ENCODE measurements at regions of chr1 and their contacts with region 1.

Region 1: GRCh38 chr1:7902478-7903085 is 38.1 kb downstream of the TNFRSF9 start:
- DNase-seq: peak; percentile 53
- H3K4me3 ChIP-seq: no peak overlapping the region
- H3K27ac ChIP-seq: no peak overlapping the region
- H3K4me1 ChIP-seq: no peaks in the 10 kb centered on the region
- CTCF ChIP-seq: peak; percentile 76

Region 2: GRCh38 chr1:7478809-7479499 is 423.6 kb before region 1 on chr1:
- CTCF ChIA-PET with region 1: no interaction called
- POLR2A ChIA-PET with region 1: no interaction called
- intact Hi-C with region 1: no loop called
- DNase-seq: no peak
- H3K4me3 ChIP-seq: no peak overlapping the region
- H3K27ac ChIP-seq: no peak overlapping the region
- H3K4me1 ChIP-seq: no peaks in the 10 kb centered on the region
- CTCF ChIP-seq: no peak

Region 3: DNA sequence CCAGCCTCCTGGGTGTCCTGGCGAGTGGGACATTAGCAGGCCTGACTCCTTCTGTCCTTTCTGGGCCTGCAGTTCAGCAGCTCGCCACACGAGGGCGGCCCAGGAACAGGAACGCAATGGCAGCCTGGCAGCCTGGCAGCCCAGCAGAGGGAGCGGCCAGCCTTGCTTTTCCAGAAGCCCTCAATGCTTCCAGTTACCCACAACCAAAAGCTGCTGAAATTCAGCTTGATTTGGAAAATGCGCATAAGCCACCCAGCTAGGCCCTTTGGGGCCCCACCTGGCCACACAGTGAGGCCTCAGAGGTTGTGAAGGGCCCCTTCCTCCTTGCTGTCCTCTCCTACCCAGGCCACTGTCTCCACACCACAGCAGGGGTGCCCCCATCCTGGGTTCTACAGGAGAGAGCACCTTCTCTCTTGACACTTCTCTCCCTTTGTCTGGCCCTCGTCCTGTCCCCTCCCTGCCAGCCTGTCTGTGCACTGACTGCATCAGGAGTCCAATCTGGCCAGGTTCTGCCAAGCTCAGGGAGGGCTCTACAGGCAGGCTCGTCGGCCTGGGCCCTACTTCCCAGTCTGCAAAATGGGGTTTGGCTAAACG is 234.9 kb before region 1 on chr1:
- CTCF ChIA-PET with region 1: interaction called, 3 read pairs
- POLR2A ChIA-PET with region 1: no interaction called
- intact Hi-C with region 1: loop called (anchors 1 kb)
- DNase-seq: peak; percentile 64
- H3K4me3 ChIP-seq: no peak overlapping the region
- H3K27ac ChIP-seq: no peak overlapping the region
- H3K4me1 ChIP-seq: no peaks in the 10 kb centered on the region
- CTCF ChIP-seq: peak; percentile 91

Region 4: DNA sequence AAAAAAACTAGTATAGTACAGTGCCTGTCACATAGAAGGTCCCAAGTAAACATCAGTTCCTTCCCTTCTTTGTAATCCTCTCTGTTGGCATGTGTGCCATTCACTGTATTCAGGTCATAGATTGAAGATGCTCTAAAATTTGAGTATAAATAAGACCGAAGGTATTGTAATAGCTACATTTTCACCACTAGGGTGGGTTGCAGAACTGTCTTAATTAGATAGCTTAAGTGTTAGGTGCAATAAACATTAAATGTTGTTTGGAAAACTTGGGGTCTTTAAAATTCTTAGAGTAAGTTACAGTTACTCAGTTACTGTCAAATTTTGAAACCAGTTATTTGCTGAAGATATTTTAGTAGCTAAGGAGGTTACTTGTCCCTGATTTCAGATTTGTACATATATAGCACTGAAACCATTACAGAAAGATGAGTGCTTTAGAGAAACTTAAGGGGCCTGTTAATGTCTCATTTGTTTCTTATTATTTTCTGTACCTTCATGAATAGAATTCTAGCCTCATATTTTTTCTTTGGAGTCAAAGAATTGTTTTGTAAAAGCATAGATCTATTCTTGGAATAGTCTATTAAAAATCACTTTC is 94.2 kb before region 1 on chr1:
- CTCF ChIA-PET with region 1: no interaction called
- POLR2A ChIA-PET with region 1: no interaction called
- intact Hi-C with region 1: loop called (anchors 2 kb)
- DNase-seq: peak; percentile 44
- H3K4me3 ChIP-seq: no peak overlapping the region
- H3K27ac ChIP-seq: no peak overlapping the region
- H3K4me1 ChIP-seq: no peaks in the 10 kb centered on the region
- CTCF ChIP-seq: peak; percentile 82